ENCODE measurements at regions of chr11 and their contacts with region 1.

Region 1: DNA sequence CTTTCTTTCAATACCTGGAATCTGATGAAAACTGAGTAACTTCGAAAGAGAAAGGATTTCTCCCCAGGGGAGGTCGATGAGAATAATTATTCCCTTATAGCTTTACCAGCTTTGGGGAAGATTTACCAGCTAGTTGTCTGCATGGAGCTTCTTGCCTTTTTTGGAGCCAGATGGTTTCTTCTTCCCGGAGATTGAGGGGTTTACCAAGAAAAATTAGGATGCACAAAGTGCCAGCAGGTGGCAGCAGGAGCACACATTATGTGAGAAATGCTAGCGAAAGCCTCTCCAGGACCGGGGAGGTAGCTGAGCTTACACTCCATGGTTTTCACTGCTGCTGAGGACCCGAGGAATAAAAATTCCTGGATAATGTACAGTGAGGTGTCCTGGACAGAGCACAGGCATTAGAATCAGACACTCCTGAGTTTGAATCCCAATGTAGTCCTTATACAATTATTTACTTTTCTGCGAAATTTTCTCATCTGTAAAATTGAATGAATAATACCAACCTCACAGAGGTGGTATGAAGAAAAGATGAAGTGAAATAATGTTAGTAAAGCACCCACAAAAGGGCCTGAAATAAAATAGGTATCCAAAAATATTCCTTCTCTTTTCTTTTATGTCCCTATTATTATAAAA is 46.0 kb upstream of the PARVA start:
- DNase-seq: peak; percentile 70
- H3K4me3 ChIP-seq: peak overlapping the region in 1 of 2 experiments; percentile 34; a peak in 1 of 4 replicates
- H3K27ac ChIP-seq: no peak overlapping the region; a peak in 1 of 4 replicates
- H3K4me1 ChIP-seq: peaks cover 10 to 16% of the 10 kb centered on the region in 2 experiments; a peak in 3 of 4 replicates
- H3K27me3 ChIP-seq: no peaks in the 10 kb centered on the region
- CTCF ChIP-seq: peak; percentile 85
- EP300 ChIP-seq: no peak
- RAD21 ChIP-seq: peak; percentile 99

Region 2: GRCh38 chr11:11987503-11988022 is 343.8 kb before region 1 on chr11:
- CTCF ChIA-PET with region 1: no interaction called
- POLR2A ChIA-PET with region 1: no interaction called
- DNase-seq: no peak
- H3K4me3 ChIP-seq: no peak overlapping the region; a peak in 1 of 4 replicates
- H3K27ac ChIP-seq: peak overlapping the region; percentile 93 to 99
- H3K4me1 ChIP-seq: peaks cover 50 to 63% of the 10 kb centered on the region in 2 experiments
- H3K27me3 ChIP-seq: no peaks in the 10 kb centered on the region
- CTCF ChIP-seq: peak; percentile 58
- EP300 ChIP-seq: no peak
- RAD21 ChIP-seq: no peak

Region 3: DNA sequence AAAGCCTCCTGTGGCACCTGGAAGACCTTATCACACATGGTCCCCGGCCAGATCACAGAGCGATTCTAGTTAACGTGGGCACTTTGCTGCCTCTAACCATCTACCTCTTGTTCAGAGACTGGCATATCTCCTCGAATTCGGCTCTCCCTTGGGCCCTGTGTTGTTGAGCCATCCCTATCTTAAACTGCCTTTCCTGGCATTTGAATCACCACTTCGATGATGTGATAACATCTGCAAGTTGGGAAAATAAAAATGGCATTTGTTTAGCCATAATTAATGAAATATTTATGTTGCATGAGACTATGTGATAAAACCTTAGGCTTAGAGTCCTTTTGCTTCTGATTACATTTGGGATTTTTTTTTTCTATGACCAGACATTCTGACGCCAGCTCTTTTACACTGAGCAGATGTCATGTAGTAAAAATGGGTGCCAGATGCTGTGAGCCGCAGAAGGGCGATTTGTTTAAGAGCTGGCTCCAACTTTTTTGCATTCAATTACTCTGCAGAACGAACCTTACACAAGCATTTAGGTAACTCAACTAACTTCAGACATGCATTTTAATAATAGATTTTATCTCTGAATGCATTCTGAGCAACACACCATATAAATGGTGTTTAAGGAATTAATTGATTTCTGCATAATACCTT is 12.4 kb before region 1 on chr11:
- CTCF ChIA-PET with region 1: interaction called, 42 read pairs
- POLR2A ChIA-PET with region 1: interaction called, 5 read pairs
- DNase-seq: peak; percentile 59
- H3K4me3 ChIP-seq: no peak overlapping the region
- H3K27ac ChIP-seq: peak overlapping the region; percentile 79 to 96
- H3K4me1 ChIP-seq: peaks cover 13 to 30% of the 10 kb centered on the region in 2 experiments; a peak in 3 of 4 replicates
- H3K27me3 ChIP-seq: no peaks in the 10 kb centered on the region
- CTCF ChIP-seq: no peak
- EP300 ChIP-seq: peak; percentile 88 to 92
- RAD21 ChIP-seq: 0 out of 2 replicates have a peak, but pooled peaks have one; percentile 14

Region 4: DNA sequence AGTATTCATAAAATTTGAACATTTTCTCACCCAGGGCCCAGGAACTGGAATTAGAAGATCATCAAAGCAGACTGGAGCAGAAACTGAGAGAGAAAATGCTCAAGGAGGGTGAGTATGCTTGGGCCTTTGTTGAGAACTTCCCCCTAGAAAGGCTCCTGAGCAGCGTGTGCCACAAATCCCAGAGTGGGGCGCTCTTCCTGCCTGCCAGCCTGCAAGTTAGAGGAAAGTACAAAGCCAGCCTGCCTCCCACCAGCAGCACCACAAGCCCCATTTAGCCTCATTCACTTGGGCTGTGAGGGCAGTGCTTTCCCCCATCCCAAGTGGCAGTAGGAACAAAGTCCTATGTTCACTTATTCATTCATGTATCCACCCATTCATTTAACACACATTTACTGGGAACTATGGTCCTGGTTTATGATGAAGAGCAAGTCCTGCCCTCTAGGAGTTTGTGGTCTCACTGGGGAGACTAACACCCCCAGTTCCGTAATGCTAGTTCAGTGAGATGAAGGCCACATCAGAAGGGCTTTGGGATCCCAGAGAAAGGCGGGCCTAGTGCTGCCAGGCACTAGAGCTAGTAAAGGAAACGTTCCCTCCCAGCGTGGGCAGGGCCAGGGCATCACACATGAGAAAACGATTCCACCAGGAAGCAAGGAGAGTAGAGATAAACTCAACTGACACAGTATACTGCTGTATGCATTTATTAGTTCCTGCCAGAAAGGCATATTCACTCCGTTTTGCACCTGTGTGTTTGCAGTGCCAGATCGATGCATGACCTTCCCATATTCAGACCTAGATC is 23.6 kb after region 1 on chr11:
- CTCF ChIA-PET with region 1: interaction called, 14 read pairs
- POLR2A ChIA-PET with region 1: no interaction called
- DNase-seq: no peak
- H3K4me3 ChIP-seq: no peak overlapping the region
- H3K27ac ChIP-seq: no peak overlapping the region
- H3K4me1 ChIP-seq: no peaks in the 10 kb centered on the region; a peak in 1 of 4 replicates
- H3K27me3 ChIP-seq: no peaks in the 10 kb centered on the region
- CTCF ChIP-seq: no peak
- EP300 ChIP-seq: no peak
- RAD21 ChIP-seq: no peak

Region 5: GRCh38 chr11:12813371-12814225 is 482.2 kb after region 1 on chr11:
- CTCF ChIA-PET with region 1: interaction called, 36 read pairs
- POLR2A ChIA-PET with region 1: no interaction called
- DNase-seq: no peak
- H3K4me3 ChIP-seq: no peak overlapping the region; a peak in 1 of 4 replicates
- H3K27ac ChIP-seq: peak overlapping the region; percentile 86 to 96
- H3K4me1 ChIP-seq: peaks cover 62 to 87% of the 10 kb centered on the region in 2 experiments
- H3K27me3 ChIP-seq: no peaks in the 10 kb centered on the region
- CTCF ChIP-seq: no peak
- EP300 ChIP-seq: no peak
- RAD21 ChIP-seq: no peak

Region 6: GRCh38 chr11:12888525-12889158 is 557.3 kb after region 1 on chr11:
- CTCF ChIA-PET with region 1: interaction called, 95 read pairs
- POLR2A ChIA-PET with region 1: no interaction called
- DNase-seq: peak; percentile 76
- H3K4me3 ChIP-seq: no peak overlapping the region
- H3K27ac ChIP-seq: peak overlapping the region; percentile 23 to 58; a peak in 2 of 4 replicates
- H3K4me1 ChIP-seq: peaks cover 16 to 41% of the 10 kb centered on the region in 2 experiments
- H3K27me3 ChIP-seq: no peaks in the 10 kb centered on the region
- CTCF ChIP-seq: peak; percentile 88
- EP300 ChIP-seq: no peak
- RAD21 ChIP-seq: peak; percentile 90

Region 7: GRCh38 chr11:12963792-12964536 is 632.6 kb after region 1 on chr11:
- CTCF ChIA-PET with region 1: interaction called, 27 read pairs
- POLR2A ChIA-PET with region 1: no interaction called
- DNase-seq: peak; percentile 88
- H3K4me3 ChIP-seq: no peak overlapping the region
- H3K27ac ChIP-seq: no peak overlapping the region
- H3K4me1 ChIP-seq: no peaks in the 10 kb centered on the region; a peak in 1 of 4 replicates
- H3K27me3 ChIP-seq: no peaks in the 10 kb centered on the region
- CTCF ChIP-seq: peak; percentile 93
- EP300 ChIP-seq: no peak
- RAD21 ChIP-seq: peak; percentile 91

Measured in SK-N-SH (cell line).